MCF 10A (cell line): ENCODE measurements at regions of chr5 and their contacts with region 1.

Region 1: GRCh38 chr5:177113566-177114424 is 19.8 kb upstream of the NSD1 start:
- DNase-seq: peak; percentile 86
- H3K4me3 Mint-ChIP-seq: no peak overlapping the region
- H3K27ac Mint-ChIP-seq: no peak overlapping the region
- H3K4me1 Mint-ChIP-seq: peaks cover 4% of the 10 kb centered on the region
- H3K27me3 Mint-ChIP-seq: no peaks in the 10 kb centered on the region
- CTCF ChIP-seq: peak; percentile 100

Region 2: GRCh38 chr5:176744584-176744965 is 369.2 kb before region 1 on chr5:
- CTCF ChIA-PET with region 1: no interaction called
- POLR2A ChIA-PET with region 1: no interaction called
- intact Hi-C with region 1: no loop called
- DNase-seq: peak; percentile 20
- H3K4me3 Mint-ChIP-seq: no peak overlapping the region
- H3K27ac Mint-ChIP-seq: no peak overlapping the region
- H3K4me1 Mint-ChIP-seq: peaks cover 6% of the 10 kb centered on the region
- H3K27me3 Mint-ChIP-seq: peaks cover 53% of the 10 kb centered on the region
- CTCF ChIP-seq: no peak

Region 3: DNA sequence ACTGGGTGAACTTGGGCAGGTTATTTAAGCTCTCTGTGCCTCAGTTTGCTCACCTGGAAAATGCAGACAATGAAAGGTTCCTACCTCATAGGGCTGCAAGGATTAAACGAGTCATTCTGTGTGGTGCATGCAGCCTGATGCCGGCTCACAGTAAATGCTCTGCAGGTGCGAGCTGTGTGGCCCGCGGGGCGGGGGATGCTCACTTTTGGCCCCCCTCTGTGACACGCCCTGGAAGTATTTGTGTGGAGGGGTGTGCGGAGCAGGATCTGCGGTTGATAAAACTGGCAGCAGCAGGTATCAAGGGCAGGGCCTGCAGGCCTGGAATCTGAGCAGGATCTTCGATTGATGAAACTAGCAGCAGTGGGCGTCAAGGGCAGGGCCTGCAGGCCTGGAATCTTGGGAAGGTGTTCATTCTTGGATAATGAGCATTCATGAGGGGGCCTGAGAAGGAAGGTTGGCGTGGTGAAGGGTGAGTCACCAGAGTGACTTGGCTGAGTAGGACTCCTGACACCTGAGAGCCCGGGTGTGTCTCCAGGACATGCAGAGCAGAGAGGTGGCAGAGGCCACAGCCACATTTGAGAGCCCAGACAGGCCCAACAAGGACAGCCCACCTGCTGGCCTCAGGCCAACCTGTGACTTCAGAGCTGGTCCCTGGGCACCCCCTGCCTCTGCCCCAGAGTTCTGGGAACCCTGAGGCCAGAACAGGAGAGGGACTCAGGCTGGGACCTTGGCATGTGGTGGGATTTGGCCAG is 291.6 kb before region 1 on chr5:
- CTCF ChIA-PET with region 1: no interaction called
- POLR2A ChIA-PET with region 1: no interaction called
- intact Hi-C with region 1: no loop called
- DNase-seq: peak; percentile 73
- H3K4me3 Mint-ChIP-seq: no peak overlapping the region
- H3K27ac Mint-ChIP-seq: no peak overlapping the region
- H3K4me1 Mint-ChIP-seq: peaks cover 16% of the 10 kb centered on the region
- H3K27me3 Mint-ChIP-seq: peaks cover 21% of the 10 kb centered on the region
- CTCF ChIP-seq: no peak

Region 4: DNA sequence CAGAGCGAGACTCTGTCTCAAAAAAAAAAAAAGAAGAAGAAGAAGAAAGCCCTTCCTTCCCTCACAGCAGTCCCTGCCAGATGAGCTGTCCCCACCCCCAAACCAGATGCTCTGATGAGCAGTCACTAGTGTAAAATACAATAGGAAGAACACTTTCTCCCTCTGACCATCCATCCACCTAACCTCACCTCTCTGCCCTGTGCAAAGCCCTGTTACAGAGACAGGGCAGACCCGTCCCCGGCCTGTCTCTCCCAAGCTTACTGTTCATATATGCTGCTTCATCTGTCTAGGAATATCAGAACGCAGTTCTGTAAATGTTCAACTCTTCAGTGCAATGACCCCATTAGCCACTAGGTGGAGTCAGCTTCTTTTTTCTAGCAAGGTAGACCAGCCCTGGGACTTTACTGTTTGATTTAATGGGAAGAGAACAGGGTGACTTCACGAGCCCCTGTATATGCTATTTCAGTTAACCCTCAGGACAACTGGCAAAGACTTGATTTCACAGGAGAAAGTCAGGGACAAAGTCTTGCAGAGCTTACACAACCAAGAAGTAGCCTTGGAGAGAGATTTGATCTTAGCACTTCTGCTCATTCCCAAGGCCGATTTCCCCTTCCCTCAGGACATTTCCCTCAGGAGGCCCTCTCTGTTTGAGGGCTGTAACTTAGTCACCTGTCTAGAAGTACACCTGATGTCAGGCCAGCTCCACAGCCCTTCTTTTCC is 42.0 kb before region 1 on chr5:
- CTCF ChIA-PET with region 1: interaction called, 235 read pairs
- POLR2A ChIA-PET with region 1: interaction called, 3 read pairs
- intact Hi-C with region 1: loop called (anchors 1 kb)
- DNase-seq: peak; percentile 93
- H3K4me3 Mint-ChIP-seq: no peak overlapping the region
- H3K27ac Mint-ChIP-seq: no peak overlapping the region
- H3K4me1 Mint-ChIP-seq: peaks cover 6% of the 10 kb centered on the region
- H3K27me3 Mint-ChIP-seq: no peaks in the 10 kb centered on the region
- CTCF ChIP-seq: peak; percentile 88

Region 5: DNA sequence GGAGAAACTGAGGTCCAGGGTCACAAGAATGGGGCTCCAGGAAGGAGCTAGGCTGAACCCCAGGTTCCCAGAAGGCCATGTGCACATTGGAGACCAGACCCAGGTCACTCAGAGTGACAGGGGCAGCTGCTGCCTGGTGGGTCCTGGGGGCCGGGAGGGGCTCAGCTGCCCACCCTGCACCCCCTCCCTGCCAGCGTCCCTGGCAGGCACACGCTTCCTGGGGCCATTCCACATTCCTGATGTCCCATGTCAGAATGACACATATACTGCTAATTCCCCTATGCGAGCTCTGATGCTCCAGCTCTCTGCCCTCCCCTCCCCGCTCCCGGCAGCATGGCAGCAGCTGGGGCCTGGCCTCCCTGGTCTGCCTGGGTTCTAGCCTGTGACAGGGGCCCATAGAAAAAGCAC is 13.1 kb before region 1 on chr5:
- CTCF ChIA-PET with region 1: interaction called, 11 read pairs
- POLR2A ChIA-PET with region 1: no interaction called
- intact Hi-C with region 1: no loop called
- DNase-seq: no peak
- H3K4me3 Mint-ChIP-seq: no peak overlapping the region
- H3K27ac Mint-ChIP-seq: no peak overlapping the region
- H3K4me1 Mint-ChIP-seq: no peaks in the 10 kb centered on the region
- H3K27me3 Mint-ChIP-seq: peaks cover 23% of the 10 kb centered on the region
- CTCF ChIP-seq: no peak

Region 6: GRCh38 chr5:177249761-177250526 is 136.1 kb after region 1 on chr5:
- CTCF ChIA-PET with region 1: interaction called, 12 read pairs
- POLR2A ChIA-PET with region 1: no interaction called
- intact Hi-C with region 1: no loop called
- DNase-seq: no peak
- H3K4me3 Mint-ChIP-seq: no peak overlapping the region
- H3K27ac Mint-ChIP-seq: no peak overlapping the region
- H3K4me1 Mint-ChIP-seq: no peaks in the 10 kb centered on the region
- H3K27me3 Mint-ChIP-seq: no peaks in the 10 kb centered on the region
- CTCF ChIP-seq: no peak

Region 7: DNA sequence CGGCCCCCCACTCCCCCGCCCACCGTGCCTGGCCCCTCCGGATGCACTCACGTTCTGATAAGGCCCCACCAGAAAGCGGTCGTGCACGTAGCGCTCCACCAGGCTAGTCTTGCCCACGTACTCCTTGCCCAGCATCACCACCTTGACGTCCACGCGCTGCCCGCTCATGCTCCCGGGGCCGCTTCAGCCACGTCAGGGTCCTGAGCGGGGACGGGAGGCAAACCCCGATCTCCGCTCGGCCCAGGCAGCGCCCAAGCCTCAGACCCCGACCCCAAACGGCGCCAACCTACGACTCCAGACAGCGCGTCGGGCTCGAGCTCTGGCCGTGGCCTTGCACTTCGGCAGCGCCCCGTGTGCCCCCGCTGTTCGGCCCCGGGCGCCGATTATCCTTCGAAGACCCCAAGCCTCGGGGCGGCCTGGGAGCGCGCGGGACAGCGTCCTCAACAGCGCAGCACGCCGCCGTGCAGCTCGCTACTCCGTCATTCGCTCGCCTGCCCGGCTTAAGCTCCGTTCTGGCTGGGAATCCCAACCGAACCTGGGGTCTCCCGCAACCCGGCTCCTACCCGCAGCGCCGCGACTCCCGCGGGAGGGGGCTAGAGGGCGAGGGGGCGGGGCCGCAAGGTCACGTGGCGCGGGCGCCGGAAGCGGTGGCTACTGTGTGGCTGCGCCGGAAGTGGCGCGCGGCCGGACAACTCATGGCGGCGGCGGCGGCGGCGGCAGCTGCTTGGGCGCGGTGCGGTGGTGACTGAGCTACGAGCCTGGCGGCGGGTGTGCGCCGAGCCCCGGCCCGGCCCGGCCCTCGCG is 189.5 kb after region 1 on chr5 and contains the starts of genes PRELID1 and RAB24:
- CTCF ChIA-PET with region 1: interaction called, 52 read pairs
- POLR2A ChIA-PET with region 1: interaction called, 16 read pairs
- intact Hi-C with region 1: loop called (anchors 1 kb)
- DNase-seq: peak; percentile 86
- H3K4me3 Mint-ChIP-seq: peak within 1 kb of the TSS; percentile 87
- H3K27ac Mint-ChIP-seq: peak within 1 kb of the TSS; percentile 73
- H3K4me1 Mint-ChIP-seq: peaks cover 57% of the 10 kb centered on the region
- H3K27me3 Mint-ChIP-seq: no peaks in the 10 kb centered on the region
- CTCF ChIP-seq: peak; percentile 59
- total RNA-seq, gene PRELID1: 217 and 267 TPM in 2 replicates
- total RNA-seq, gene RAB24: 34.3 and 42.6 TPM in 2 replicates

Region 8: GRCh38 chr5:177403792-177404640 is 290.2 kb after region 1 on chr5:
- CTCF ChIA-PET with region 1: interaction called, 26 read pairs
- POLR2A ChIA-PET with region 1: no interaction called
- intact Hi-C with region 1: loop called (anchors 1 kb)
- DNase-seq: peak; percentile 89
- H3K4me3 Mint-ChIP-seq: peak overlapping the region; percentile 87
- H3K27ac Mint-ChIP-seq: peak overlapping the region; percentile 85
- H3K4me1 Mint-ChIP-seq: peaks cover 25% of the 10 kb centered on the region
- H3K27me3 Mint-ChIP-seq: no peaks in the 10 kb centered on the region
- CTCF ChIP-seq: peak; percentile 88